Colonic mucosa (tissue), 4 donors: ENCODE measurements at regions of chr11 and their contacts with region 1.

Region 1: DNA sequence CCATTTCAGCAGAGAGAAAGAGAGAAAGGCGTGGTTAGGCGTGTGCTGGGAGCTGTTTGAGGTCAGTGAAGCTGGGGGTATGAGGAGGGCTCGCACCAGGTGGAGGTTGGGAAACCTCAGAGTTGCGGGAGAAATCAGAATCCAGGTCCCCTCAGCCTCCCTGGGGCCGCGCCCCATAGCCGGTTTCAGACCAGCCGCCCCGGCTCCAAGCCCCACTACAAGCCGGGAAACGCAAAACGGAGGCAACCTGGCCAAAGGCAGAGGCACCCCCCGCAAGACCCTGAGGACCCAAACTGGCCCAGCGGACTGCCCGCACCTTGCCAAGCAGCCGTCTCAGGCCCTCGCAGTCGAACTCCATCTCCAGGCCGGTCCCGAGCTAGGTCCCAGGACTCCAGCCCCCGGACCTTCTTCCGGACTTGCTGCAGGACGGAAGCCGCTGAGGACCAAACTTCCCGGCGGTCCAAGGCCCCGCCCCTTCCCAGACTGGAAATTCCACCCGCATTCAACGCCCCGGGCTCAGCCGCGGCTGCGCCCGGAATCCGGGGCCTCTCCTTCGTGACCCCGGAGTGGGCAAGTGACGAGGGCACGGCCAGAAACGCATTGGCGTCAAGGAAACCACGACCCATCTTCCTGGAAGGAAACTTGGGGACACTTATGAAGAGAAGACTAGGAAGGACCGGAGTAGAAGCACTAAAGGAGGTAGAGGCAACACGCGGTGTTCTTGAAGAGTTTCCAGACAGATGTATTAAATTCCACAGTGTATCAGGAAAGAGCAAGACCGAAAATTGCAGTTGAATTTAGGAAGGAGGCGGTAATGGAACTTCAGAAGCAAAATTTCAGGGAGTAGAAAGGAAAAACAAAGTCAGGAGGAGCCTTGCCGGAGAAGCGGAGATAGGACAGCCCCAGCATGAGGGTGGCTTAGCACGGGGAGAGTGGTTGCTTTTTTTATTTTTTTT is at the start of gene UEVLD:
- DNase-seq: peak; percentile 92
- H3K4me3 ChIP-seq: peak within 1 kb of the TSS; percentile 82
- H3K27ac ChIP-seq: peak within 1 kb of the TSS; percentile 75
- H3K4me1 ChIP-seq: peaks cover 4% of the 10 kb centered on the region
- H3K27me3 ChIP-seq: no peaks in the 10 kb centered on the region
- CTCF ChIP-seq: no peak
- total RNA-seq, gene UEVLD: 29.2 to 46.6 TPM

Region 2: DNA sequence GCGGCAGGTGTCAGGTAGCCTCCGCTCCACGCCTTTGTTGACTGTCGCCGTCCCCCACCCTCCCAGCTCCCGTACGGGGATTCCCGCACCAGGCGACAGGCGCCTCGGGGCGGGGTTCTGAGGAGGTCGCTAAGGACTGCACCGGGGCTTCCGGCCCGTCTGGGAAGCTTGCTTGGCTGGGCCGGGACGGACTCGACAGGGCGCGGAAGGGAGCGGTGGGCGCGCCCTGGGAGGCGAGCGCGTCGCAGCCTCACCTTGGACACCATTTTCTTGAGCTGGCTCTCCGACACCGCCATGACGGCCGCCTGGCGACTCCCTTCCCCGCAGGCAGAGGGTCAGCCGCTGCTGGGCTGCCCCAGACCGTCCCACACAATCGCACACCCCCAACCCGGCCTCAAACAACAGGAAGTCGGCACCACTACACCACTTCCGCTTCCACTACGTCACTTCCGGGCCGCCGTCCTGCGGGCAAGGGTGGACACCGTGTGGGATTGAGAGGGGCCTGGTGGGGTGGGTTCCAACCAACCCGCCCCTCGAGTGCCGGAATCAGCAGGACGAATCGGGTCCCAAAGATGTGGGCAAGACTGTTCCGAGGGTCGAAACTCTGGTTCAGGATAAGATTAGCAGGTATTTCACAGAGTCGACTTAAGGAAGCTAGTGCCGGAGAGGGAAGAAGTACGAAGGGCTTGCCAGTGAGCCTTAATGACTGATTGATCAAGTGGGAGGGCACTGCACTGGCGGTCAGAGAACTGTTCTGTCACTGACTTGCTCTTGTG is 61.9 kb before region 1 on chr11 and contains the start of gene TSG101:
- intact Hi-C with region 1: loop called (anchors 5 kb)
- DNase-seq: peak; percentile 98
- H3K4me3 ChIP-seq: peak within 1 kb of the TSS; percentile 81
- H3K27ac ChIP-seq: peak within 1 kb of the TSS; percentile 91
- H3K4me1 ChIP-seq: no peaks in the 10 kb centered on the region
- H3K27me3 ChIP-seq: no peaks in the 10 kb centered on the region
- CTCF ChIP-seq: no peak
- total RNA-seq, gene TSG101: 54.0 to 64.9 TPM

Region 3: DNA sequence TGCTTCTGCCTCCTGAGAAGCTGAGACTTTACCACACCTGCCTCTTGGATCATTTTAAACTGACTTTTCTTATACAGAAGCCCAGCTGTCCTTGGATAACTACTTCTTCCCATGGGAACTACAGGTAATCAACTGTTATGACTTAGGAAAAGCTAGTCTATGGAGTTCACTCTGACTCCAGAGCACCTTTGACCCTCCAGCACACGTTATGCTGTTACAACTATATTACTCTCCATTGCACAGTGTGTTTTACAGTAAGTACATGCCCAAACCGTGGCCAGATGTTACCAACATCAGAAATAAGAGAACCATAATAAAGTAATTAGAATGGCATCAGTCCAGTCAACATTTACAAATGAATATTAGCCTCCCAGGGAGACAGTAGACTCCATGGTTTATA is 40.6 kb before region 1 on chr11:
- intact Hi-C with region 1: no loop called
- DNase-seq: no peak
- H3K4me3 ChIP-seq: no peak overlapping the region
- H3K27ac ChIP-seq: no peak overlapping the region
- H3K4me1 ChIP-seq: no peaks in the 10 kb centered on the region
- H3K27me3 ChIP-seq: no peaks in the 10 kb centered on the region
- CTCF ChIP-seq: no peak

Region 4: DNA sequence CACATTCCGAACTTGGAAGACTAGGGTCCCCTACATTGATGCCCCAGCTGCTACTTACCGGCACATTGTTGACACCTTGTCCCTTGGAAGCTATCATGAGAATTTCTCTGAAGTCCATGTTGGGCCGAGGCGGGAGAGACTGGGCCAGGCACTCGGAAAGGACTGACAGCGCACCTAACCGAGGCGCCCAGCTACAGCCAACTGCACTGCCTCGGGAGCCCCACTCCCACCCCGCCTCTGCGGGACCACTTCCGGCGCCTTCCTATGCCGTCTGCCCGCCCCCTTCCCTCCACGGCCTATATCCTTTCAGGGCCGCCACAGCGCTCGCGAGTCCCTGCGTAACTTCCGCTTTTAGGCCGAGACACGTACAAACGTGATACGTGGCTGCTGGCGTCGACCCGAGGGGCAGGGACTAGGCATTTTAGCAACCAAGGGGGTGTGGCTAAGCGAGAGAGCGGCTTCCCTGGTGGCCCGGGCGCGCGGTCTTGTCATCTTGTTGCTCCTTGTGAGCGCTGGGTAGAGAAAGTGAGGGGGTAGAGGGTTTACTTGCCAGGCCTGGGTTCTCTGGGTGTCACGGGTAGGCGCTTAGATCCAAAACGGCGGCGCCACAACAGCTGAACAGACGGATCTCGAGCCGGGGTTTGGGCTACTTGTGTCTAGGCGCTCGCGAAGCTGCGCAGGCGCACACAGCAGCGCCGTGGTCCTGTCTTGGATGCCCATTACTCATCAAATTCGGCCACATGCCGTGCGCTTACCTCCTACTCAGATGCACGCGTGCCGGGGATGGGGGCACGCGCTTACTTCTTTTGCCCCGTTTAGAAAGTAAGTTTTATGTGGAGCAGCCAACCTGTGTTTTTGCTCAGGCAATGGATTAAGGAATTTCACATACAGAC is 45.8 kb after region 1 on chr11 and contains the start of gene SPTY2D1:
- intact Hi-C with region 1: loop called (anchors 10 kb)
- DNase-seq: peak; percentile 99
- H3K4me3 ChIP-seq: peak within 1 kb of the TSS; percentile 80
- H3K27ac ChIP-seq: peak within 1 kb of the TSS; percentile 92
- H3K4me1 ChIP-seq: peaks cover 6% of the 10 kb centered on the region
- H3K27me3 ChIP-seq: no peaks in the 10 kb centered on the region
- CTCF ChIP-seq: no peak
- total RNA-seq, gene SPTY2D1: 21.9 to 22.6 TPM

Region 5: DNA sequence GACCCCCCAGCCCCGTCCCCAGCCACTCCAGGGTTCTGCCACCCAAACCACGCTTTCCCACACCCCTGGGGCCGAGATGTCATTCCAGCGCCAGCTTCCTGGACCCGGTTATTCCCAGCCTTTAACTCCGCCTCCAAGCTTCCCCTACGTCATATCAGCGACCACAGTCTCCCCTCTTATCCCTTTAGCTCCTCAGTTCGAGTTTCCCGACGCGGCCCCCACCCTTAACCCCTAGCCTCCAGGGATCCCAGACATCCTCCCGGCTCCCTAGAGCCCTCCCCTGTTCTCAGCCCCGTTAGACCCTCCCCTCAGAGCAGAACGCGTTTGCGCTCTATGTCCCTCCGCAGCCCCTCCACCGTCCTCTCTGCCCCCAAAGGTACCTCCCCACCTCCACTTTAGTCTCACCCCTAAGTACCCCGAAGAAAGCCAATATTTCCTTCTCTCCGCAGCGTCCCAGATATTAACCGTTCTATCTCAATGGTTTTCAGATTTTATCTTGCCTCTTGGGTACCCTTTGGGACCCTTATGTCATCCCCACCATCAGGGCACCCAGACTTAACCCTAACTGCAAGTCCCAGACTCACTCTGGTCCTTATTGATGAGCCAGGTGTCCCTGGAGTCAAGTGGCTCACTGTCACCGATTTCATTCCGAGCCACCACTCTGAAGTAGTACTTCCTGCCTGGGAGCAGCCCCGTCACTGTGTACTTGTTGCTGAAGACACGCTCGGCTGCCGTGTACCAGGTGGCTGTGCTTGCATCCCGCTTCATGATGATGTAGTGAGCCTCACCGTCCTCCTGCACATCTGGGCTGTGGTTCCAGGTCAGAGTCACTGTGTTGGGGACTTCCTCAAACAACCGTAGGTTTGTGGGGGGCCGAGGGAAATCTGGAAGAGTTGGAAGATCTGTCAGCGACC is 118.0 kb after region 1 on chr11:
- intact Hi-C with region 1: no loop called
- DNase-seq: peak; percentile 75
- H3K4me3 ChIP-seq: peak overlapping the region; percentile 43
- H3K27ac ChIP-seq: no peak overlapping the region
- H3K4me1 ChIP-seq: peaks cover 4% of the 10 kb centered on the region
- H3K27me3 ChIP-seq: no peaks in the 10 kb centered on the region
- CTCF ChIP-seq: no peak